ENCODE measurements at regions of chr10 and their contacts with region 1.

Region 1: GRCh38 chr10:125521721-125522680 is 161.0 kb downstream of the TEX36 start:
- DNase-seq: peak; percentile 88
- ATAC-seq: peak; percentile 99
- H3K4me3 ChIP-seq: peak overlapping the region; percentile 30 to 48
- H3K27ac ChIP-seq: 0 out of 2 replicates have a peak overlapping the region, but pooled peaks have one; percentile 11
- H3K4me1 ChIP-seq: peaks cover 5 to 14% of the 10 kb centered on the region in 2 experiments
- H3K27me3 ChIP-seq: no peaks in the 10 kb centered on the region
- CTCF ChIP-seq: peak; percentile 98 to 100 (median 99)
- POLR2A ChIP-seq: peak; percentile 52
- RAD21 ChIP-seq: peak; percentile 81

Region 2: DNA sequence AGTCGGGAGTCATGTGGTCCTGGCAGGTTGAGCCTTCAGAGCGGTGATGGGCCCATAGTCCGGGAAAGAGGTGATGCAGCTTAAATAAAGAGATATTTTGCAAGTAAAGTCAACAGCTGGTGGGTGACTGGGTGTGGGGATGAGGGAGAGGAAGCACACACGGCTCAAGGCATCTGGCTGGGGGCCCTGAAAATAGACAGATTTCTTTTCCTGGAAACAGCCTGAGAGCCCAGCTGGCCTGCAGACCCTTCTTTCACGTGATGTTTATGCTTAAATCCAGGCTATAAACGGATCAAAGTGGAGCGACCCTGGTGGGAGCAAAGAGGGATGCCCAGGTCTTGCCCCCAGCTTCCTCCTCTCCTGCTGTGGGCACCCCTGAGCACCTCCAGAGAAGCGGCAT is 11.9 kb after region 1 on chr10:
- CTCF ChIA-PET with region 1: interaction called, 13 read pairs
- POLR2A ChIA-PET with region 1: interaction called, 4 read pairs
- RAD21 ChIA-PET with region 1: no interaction called
- intact Hi-C with region 1: no loop called
- DNase-seq: no peak
- ATAC-seq: no peak
- H3K4me3 ChIP-seq: no peak overlapping the region
- H3K27ac ChIP-seq: no peak overlapping the region
- H3K4me1 ChIP-seq: no peaks in the 10 kb centered on the region; a peak in 1 of 4 replicates
- H3K27me3 ChIP-seq: peaks cover 38% of the 10 kb centered on the region
- CTCF ChIP-seq: no peak
- POLR2A ChIP-seq: no peak
- RAD21 ChIP-seq: no peak

Region 3: DNA sequence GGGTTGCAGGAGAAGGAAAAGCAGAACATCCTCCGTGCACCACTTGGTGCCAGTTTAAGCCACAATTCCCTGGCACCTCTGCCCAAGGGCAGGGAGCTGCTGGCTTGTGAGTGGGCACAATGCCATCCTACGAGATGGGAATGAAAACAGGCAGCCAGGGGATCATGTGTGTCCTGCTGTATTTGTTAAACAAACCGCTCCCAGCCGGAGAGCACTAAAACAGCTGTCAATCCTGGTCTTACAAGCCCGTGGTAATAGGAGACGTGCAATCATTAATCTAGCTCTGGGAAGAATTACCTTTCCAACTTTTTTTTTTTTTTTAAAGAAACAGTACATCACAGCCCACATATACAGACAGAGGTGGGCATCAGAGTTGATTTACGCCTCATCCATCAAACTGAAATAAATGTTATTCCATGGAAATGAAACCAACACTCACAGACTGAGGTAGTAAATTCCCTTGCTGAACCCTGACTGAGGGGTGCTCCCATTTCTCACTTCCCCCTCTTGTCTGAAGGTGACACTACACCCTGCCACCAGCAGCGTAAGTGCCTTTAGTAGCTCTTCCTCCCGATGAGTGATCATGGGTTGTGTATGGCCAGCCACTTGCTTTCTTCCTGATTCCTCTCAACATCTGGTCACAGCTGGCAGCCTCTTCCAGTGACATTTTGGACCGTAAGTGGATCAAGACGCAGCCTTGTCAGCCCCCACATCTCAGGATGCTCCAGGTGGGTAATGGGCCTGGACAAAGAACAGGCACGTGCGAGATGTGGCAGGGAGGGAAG is 17.1 kb after region 1 on chr10:
- CTCF ChIA-PET with region 1: interaction called, 13 read pairs
- POLR2A ChIA-PET with region 1: no interaction called
- RAD21 ChIA-PET with region 1: no interaction called
- intact Hi-C with region 1: no loop called
- DNase-seq: no peak
- ATAC-seq: peak; percentile 57
- H3K4me3 ChIP-seq: no peak overlapping the region
- H3K27ac ChIP-seq: no peak overlapping the region
- H3K4me1 ChIP-seq: no peaks in the 10 kb centered on the region; a peak in 1 of 4 replicates
- H3K27me3 ChIP-seq: peaks cover 78% of the 10 kb centered on the region
- CTCF ChIP-seq: no peak
- POLR2A ChIP-seq: no peak
- RAD21 ChIP-seq: no peak

Region 4: DNA sequence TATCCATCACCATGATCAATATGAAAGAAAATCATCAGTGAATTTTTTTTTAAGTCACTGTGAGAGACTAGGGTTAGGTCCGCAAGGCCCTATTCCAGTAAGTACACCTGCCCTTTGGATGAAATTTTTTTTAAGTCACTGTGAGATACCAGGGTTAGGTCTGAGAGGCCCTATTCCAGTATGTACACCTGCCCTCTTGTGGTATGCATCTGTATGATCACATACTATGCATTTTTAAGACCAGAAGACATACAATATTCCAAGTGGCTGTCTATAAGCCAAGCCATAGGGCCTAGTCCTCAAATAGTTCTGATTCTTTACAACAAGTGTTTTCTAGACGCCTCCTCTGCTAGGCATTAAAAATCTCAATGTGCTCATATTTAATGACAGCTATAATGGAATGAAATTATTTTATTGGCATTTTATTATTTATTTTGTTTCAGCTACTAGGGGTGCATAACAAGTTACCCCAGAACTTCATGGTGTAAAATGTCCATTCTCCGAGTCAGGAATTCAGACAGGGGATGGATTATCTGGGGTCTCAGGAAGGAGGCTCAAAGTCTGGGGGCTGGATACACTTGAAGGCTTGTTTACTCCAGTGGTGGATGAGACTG is 107.9 kb after region 1 on chr10:
- CTCF ChIA-PET with region 1: interaction called, 4 read pairs
- POLR2A ChIA-PET with region 1: no interaction called
- RAD21 ChIA-PET with region 1: no interaction called
- intact Hi-C with region 1: loop called (anchors 5 kb)
- DNase-seq: peak; percentile 66
- ATAC-seq: peak; percentile 90
- H3K4me3 ChIP-seq: no peak overlapping the region
- H3K27ac ChIP-seq: no peak overlapping the region
- H3K4me1 ChIP-seq: peaks cover 10 to 11% of the 10 kb centered on the region in 2 experiments; a peak in 3 of 4 replicates
- H3K27me3 ChIP-seq: peaks cover 44% of the 10 kb centered on the region; the same call in 1 of the 2 replicates
- CTCF ChIP-seq: peak; percentile 78 to 79 (median 79)
- POLR2A ChIP-seq: no peak
- RAD21 ChIP-seq: peak; percentile 90

Region 5: DNA sequence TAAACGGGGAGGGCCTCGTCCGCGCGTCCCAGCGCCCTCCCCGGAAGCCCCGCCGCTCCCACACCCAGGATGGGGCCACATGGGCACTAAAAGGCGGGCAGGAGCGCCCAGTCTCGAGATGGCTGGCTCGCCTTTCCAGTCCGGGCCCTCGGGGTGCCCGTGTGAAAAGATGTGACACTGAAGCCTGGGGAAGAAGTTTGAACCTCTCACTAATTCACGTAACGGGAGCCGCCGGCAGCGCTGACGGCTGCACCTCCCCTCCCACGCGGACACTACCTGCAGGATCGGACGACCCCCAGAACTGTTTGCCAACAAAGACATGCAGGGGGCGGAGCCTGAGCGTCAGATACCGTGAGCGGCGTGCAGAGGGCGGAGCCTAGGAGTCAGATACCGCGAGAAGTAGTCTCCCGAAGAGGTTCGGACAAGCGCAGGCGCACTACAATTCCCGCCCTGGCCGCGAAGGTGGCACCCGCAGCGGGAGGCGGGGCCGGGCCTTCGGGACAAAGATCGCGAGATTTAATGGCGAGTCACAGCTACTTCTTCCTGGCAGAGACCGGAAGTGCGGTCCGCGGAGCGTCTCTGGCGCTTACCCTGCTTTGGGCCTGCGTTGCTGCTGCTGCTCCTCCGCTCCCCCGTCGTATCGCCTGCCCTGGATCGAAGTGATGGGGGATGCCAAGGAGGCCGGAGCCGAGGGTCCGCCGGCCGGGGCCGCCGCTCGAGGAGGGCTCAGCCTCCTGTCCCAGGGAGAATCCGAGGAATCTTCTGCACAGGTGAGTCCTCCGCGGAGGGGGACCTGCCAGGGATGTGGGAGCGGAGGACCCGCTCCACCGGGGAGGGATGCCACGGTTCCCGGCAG is 197.4 kb after region 1 on chr10 and contains the start of gene EDRF1:
- CTCF ChIA-PET with region 1: no interaction called
- POLR2A ChIA-PET with region 1: no interaction called
- RAD21 ChIA-PET with region 1: no interaction called
- intact Hi-C with region 1: loop called (anchors 5 kb)
- DNase-seq: peak; percentile 99
- ATAC-seq: peak; percentile 97
- H3K4me3 ChIP-seq: peak within 1 kb of the TSS; percentile 87 to 99
- H3K27ac ChIP-seq: peak within 1 kb of the TSS; percentile 78
- H3K4me1 ChIP-seq: peaks cover 12 to 20% of the 10 kb centered on the region in 2 experiments
- H3K27me3 ChIP-seq: no peaks in the 10 kb centered on the region
- CTCF ChIP-seq: no peak
- POLR2A ChIP-seq: peak; percentile 97
- RAD21 ChIP-seq: no peak; the same call in 1 of the 2 replicates
- total RNA-seq, gene EDRF1: 49.2 TPM

Region 6: GRCh38 chr10:125822878-125823662 is 301.1 kb after region 1 on chr10 and contains the starts of genes BCCIP and UROS:
- CTCF ChIA-PET with region 1: no interaction called
- POLR2A ChIA-PET with region 1: no interaction called
- RAD21 ChIA-PET with region 1: no interaction called
- intact Hi-C with region 1: loop called (anchors 2 kb)
- DNase-seq: peak; percentile 88
- ATAC-seq: peak; percentile 84
- H3K4me3 ChIP-seq: peak within 1 kb of the TSS; percentile 82
- H3K27ac ChIP-seq: peak within 1 kb of the TSS; percentile 72
- H3K4me1 ChIP-seq: peaks cover 13 to 20% of the 10 kb centered on the region in 2 experiments
- H3K27me3 ChIP-seq: no peaks in the 10 kb centered on the region
- CTCF ChIP-seq: no peak
- POLR2A ChIP-seq: peak; percentile 94
- RAD21 ChIP-seq: no peak
- total RNA-seq, gene BCCIP: 159 TPM
- total RNA-seq, gene UROS: 63.9 TPM

Measured in HCT116 (cell line).